CD8-positive, alpha-beta T cell (primary cell): ENCODE measurements at regions of chr5 and their contacts with region 1.

Region 1: GRCh38 chr5:87267574-87268125 is at the start of gene RASA1:
- DNase-seq: peak in 8 of 9 experiments; percentile 63 to 88 (median 76)
- ATAC-seq: peak; percentile 60
- H3K4me3 ChIP-seq: peak within 1 kb of the TSS; percentile 96
- H3K4me3 Mint-ChIP-seq: peak within 1 kb of the TSS; percentile 99
- H3K27ac ChIP-seq: peak within 1 kb of the TSS; percentile 69
- H3K27ac Mint-ChIP-seq: peak within 1 kb of the TSS; percentile 93
- H3K4me1 ChIP-seq: peaks cover 6% of the 10 kb centered on the region
- H3K4me1 Mint-ChIP-seq: peaks cover 28% of the 10 kb centered on the region
- H3K27me3 ChIP-seq: no peaks in the 10 kb centered on the region
- H3K27me3 Mint-ChIP-seq: no peaks in the 10 kb centered on the region
- CTCF ChIP-seq: no peak
- total RNA-seq, gene RASA1: 7.7 to 7.9 TPM

Region 2: DNA sequence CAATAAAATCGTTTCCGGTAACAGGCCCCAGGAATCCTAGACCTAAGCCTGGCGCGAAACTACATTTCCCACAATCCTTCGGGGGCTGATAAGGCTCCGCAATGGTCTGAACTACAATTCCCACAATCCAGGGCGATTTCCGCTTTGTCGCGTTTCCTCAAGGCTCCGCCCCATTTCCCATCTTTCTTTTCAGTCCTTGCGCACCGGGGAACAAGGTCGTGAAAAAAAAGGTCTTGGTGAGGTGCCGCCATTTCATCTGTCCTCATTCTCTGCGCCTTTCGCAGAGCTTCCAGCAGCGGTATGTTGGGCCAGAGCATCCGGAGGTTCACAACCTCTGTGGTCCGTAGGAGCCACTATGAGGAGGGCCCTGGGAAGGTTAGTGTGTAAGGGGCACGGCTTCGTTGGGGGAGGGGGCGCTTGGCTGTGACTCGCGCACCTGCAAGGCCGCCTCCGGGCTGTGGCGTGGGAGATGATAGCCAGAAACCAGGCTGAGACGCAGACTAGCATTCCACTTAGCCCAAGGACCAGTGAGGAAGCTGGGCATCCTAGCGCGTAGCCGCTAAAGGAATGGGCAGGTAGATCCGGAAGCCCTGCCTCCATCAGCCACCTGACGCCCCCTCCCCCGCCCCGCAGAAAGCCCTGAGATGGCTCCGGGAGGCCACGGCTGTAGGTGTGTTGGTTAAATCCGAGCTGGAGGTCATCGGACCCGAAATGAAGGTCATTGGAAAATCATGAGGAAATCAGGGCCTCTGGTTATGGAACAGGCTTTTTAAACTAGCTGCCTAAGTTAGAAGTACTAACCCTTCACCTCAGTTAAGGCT is 649.7 kb before region 1 on chr5 and contains the start of gene COX7C:
- CTCF ChIA-PET with region 1: no interaction called
- POLR2A ChIA-PET with region 1: no interaction called
- intact Hi-C with region 1: loop called in 1 of 2 experiments (anchors 5 kb)
- DNase-seq: peak; percentile 84 to 98 (median 91)
- ATAC-seq: peak; percentile 92
- H3K4me3 ChIP-seq: peak within 1 kb of the TSS; percentile 69 to 97
- H3K4me3 Mint-ChIP-seq: peak within 1 kb of the TSS; percentile 100
- H3K27ac ChIP-seq: peak within 1 kb of the TSS; percentile 89 to 96
- H3K27ac Mint-ChIP-seq: peak within 1 kb of the TSS; percentile 100
- H3K4me1 ChIP-seq: peaks cover 15% of the 10 kb centered on the region
- H3K4me1 Mint-ChIP-seq: peaks cover 28% of the 10 kb centered on the region
- H3K27me3 ChIP-seq: no peaks in the 10 kb centered on the region
- H3K27me3 Mint-ChIP-seq: peaks cover 10% of the 10 kb centered on the region
- CTCF ChIP-seq: no peak
- total RNA-seq, gene COX7C: 432 to 495 TPM

Region 3: DNA sequence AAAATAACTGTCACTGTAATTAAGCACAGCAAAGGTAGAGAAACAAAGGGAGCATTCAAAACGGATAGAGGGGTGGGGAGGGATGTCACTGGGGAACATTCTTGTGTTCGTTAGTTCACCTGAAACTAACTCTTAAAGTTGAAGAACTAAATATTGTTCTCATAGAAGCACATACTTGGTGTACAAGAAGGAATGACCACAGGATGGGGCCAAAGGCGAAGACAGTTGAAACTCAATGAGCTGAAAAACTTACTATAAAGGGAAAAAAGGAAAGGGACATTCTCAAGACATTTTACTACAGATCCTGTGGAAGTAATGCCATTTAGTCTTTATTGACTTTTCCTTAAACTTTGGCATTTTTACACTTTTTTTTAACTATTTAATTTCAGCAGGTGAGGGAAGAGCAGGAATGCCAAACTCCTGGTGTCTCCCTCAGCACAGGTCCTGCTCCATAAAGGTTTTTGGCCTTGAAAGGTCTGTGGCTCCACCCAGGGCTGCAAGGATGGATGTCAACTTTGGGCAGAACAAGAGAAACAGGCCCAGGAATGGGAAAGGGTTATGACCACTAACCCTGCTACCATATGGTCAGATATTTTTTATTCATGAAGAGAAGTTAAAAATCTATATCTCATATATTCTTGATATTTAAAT is 197.6 kb before region 1 on chr5:
- CTCF ChIA-PET with region 1: no interaction called
- POLR2A ChIA-PET with region 1: no interaction called
- intact Hi-C with region 1: loop called in 1 of 2 experiments (anchors 5 kb)
- DNase-seq: peak in 2 of 9 experiments; percentile 38 to 47
- ATAC-seq: no peak
- H3K4me3 ChIP-seq: no peak overlapping the region
- H3K4me3 Mint-ChIP-seq: no peak overlapping the region
- H3K27ac ChIP-seq: no peak overlapping the region
- H3K27ac Mint-ChIP-seq: no peak overlapping the region
- H3K4me1 ChIP-seq: peaks cover 12% of the 10 kb centered on the region
- H3K4me1 Mint-ChIP-seq: peaks cover 28% of the 10 kb centered on the region
- H3K27me3 ChIP-seq: no peaks in the 10 kb centered on the region
- H3K27me3 Mint-ChIP-seq: no peaks in the 10 kb centered on the region
- CTCF ChIP-seq: no peak

Region 4: DNA sequence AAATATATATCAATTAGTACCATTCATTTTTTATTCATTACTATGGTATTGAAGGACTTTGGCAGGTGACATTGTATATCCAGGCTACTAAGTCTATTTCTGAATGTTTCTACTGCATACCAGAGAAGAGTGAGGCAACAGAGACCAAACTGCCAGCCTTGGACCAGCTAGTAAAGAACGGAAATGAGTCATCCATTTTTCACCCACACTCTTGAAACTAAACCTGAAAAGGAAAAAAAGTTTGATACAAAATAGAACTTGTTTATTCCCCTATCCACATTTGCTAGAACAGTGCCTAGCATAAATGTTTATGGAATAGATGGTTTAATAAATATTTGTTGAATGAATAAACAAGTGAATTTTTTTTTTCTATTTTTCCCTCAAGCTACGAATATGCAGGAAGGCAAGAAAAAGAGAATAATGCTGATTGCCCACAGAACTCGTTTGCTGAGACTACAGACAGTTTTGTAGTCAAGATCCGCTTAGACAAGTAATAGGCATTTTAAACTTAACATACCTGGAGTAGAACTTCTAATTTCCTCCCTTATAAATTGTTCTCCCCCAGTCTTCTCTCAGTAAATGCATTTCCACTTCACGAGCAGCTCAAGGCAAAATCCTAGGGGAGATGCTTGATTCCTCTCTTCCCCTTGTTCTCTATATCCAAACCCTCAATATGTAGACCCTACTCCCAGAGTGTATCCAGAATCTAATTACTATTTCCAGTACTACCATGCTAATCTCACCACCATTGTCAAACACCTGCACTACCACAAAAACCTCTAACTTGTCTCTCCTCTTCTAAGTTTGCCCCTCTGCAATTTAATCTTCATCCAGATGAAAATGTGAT is 146.1 kb before region 1 on chr5:
- CTCF ChIA-PET with region 1: no interaction called
- POLR2A ChIA-PET with region 1: interaction called, 4 read pairs
- intact Hi-C with region 1: loop called in 1 of 2 experiments (anchors 5 kb)
- DNase-seq: peak; percentile 0 to 79 (median 30)
- ATAC-seq: peak; percentile 76
- H3K4me3 ChIP-seq: no peak overlapping the region
- H3K4me3 Mint-ChIP-seq: peak overlapping the region; percentile 38
- H3K27ac ChIP-seq: peak overlapping the region; percentile 2 to 74
- H3K27ac Mint-ChIP-seq: peak overlapping the region; percentile 78
- H3K4me1 ChIP-seq: peaks cover 28% of the 10 kb centered on the region
- H3K4me1 Mint-ChIP-seq: peaks cover 44% of the 10 kb centered on the region
- H3K27me3 ChIP-seq: no peaks in the 10 kb centered on the region
- H3K27me3 Mint-ChIP-seq: no peaks in the 10 kb centered on the region
- CTCF ChIP-seq: no peak

Region 5: GRCh38 chr5:87300744-87301143 is 33.1 kb after region 1 on chr5:
- CTCF ChIA-PET with region 1: interaction called, 3 read pairs
- POLR2A ChIA-PET with region 1: no interaction called
- intact Hi-C with region 1: loop called in 1 of 2 experiments (anchors 5 kb)
- DNase-seq: peak in 3 of 9 experiments; percentile 16 to 20 (median 16)
- ATAC-seq: peak; percentile 34
- H3K4me3 ChIP-seq: no peak overlapping the region
- H3K4me3 Mint-ChIP-seq: no peak overlapping the region
- H3K27ac ChIP-seq: no peak overlapping the region
- H3K27ac Mint-ChIP-seq: no peak overlapping the region
- H3K4me1 ChIP-seq: peaks cover 16% of the 10 kb centered on the region
- H3K4me1 Mint-ChIP-seq: peaks cover 54% of the 10 kb centered on the region
- H3K27me3 ChIP-seq: no peaks in the 10 kb centered on the region
- H3K27me3 Mint-ChIP-seq: no peaks in the 10 kb centered on the region
- CTCF ChIP-seq: no peak

Region 6: DNA sequence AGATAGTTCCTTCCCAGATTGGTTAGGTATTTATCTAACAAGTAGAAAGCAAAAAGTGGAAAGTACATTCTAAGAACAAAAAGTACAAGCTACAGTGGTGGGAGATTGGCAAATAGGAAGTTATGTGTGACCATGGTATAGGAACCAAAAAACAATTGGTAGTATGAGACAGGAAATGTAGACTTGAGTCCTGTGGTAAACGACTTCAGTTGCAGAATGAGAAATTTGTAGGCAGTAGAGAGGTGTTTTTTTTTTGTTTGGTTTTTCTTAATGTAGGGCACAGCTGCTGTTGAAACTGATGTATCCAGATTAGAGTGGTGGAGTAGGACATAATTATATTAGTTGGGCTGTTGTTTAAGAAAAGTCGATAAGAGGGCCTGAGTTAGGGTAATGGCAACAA is 73.1 kb after region 1 on chr5:
- CTCF ChIA-PET with region 1: no interaction called
- POLR2A ChIA-PET with region 1: interaction called, 3 read pairs
- intact Hi-C with region 1: loop called (anchors 2 to 5 kb)
- DNase-seq: peak in 2 of 9 experiments; percentile 59 to 70
- ATAC-seq: peak; percentile 96
- H3K4me3 ChIP-seq: peak overlapping the region in 1 of 2 experiments; percentile 23
- H3K4me3 Mint-ChIP-seq: peak overlapping the region; percentile 73
- H3K27ac ChIP-seq: peak overlapping the region; percentile 45 to 74
- H3K27ac Mint-ChIP-seq: peak overlapping the region; percentile 90
- H3K4me1 ChIP-seq: peaks cover 17% of the 10 kb centered on the region
- H3K4me1 Mint-ChIP-seq: peaks cover 29% of the 10 kb centered on the region
- H3K27me3 ChIP-seq: no peaks in the 10 kb centered on the region
- H3K27me3 Mint-ChIP-seq: no peaks in the 10 kb centered on the region
- CTCF ChIP-seq: no peak